ENCODE measurements at regions of chr3 and their contacts with region 1.

Region 1: GRCh38 chr3:70358978-70359580 is 46.6 kb upstream of the MDFIC2 start:
- H3K4me3 Mint-ChIP-seq: no peak overlapping the region
- H3K27ac Mint-ChIP-seq: no peak overlapping the region
- H3K4me1 Mint-ChIP-seq: no peaks in the 10 kb centered on the region
- H3K27me3 Mint-ChIP-seq: no peaks in the 10 kb centered on the region

Region 2: GRCh38 chr3:70064194-70064779 is 294.8 kb before region 1 on chr3:
- intact Hi-C with region 1: loop called (anchors 2 kb)
- H3K4me3 Mint-ChIP-seq: no peak overlapping the region
- H3K27ac Mint-ChIP-seq: no peak overlapping the region
- H3K4me1 Mint-ChIP-seq: no peaks in the 10 kb centered on the region
- H3K27me3 Mint-ChIP-seq: peaks cover 19% of the 10 kb centered on the region

Region 3: GRCh38 chr3:70120357-70121121 is 238.5 kb before region 1 on chr3:
- intact Hi-C with region 1: loop called (anchors 2 kb)
- H3K4me3 Mint-ChIP-seq: no peak overlapping the region
- H3K27ac Mint-ChIP-seq: no peak overlapping the region
- H3K4me1 Mint-ChIP-seq: no peaks in the 10 kb centered on the region
- H3K27me3 Mint-ChIP-seq: peaks cover 7% of the 10 kb centered on the region